ENCODE measurements at regions of chr3 and their contacts with region 1.

Region 1: DNA sequence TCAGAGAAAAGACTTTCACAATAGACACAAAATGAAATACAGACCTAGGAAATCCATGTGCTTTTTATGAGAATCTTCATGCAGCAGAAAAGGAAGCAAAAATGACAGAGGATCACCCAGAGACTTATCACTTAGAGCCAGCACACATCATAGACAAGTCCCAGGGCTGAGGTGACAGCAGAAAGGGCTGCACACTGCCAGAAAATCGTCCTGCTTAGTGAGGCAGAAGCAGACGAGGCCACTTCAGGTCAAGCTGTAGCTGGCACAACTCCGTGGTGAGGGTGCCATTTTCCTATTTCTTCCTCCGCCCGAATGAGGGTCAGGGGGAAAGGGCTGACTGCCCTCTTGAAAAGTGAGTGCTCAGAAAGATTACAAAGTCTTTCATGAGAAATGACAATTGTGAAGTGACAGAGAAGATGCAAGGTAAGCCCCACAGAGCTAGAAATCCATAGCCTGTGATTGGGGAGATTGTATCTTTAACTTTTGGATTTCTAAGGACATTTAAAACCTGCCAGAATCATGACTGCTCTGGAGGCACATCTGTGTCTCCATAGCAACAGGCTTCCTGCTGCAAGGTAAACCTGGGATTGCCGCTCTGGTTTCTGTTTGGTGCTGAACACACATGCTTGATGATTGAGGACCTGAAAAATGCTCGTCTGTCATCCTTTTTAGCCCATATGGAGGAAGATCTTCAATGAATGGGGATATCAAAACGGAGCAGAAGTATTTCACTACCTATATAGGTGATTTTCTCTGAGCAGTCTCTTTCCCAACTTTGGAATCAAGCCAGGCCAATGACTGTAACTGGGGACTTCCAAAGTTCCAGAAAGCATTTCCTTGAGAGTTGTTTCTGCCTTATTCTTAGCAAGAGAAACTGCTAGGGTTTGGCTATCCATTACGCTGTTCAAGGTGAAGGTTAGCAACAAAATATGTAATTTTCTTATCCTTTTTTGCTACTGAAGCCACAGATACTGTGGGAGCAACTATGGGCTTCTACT is 96.2 kb upstream of the TNIK start:
- DNase-seq: no peak
- CTCF ChIP-seq: no peak

Region 2: GRCh38 chr3:171511450-171511849 is 45.0 kb before region 1 on chr3:
- CTCF ChIA-PET with region 1: no interaction called
- POLR2A ChIA-PET with region 1: interaction called, 12 read pairs
- DNase-seq: no peak
- CTCF ChIP-seq: no peak

Region 3: DNA sequence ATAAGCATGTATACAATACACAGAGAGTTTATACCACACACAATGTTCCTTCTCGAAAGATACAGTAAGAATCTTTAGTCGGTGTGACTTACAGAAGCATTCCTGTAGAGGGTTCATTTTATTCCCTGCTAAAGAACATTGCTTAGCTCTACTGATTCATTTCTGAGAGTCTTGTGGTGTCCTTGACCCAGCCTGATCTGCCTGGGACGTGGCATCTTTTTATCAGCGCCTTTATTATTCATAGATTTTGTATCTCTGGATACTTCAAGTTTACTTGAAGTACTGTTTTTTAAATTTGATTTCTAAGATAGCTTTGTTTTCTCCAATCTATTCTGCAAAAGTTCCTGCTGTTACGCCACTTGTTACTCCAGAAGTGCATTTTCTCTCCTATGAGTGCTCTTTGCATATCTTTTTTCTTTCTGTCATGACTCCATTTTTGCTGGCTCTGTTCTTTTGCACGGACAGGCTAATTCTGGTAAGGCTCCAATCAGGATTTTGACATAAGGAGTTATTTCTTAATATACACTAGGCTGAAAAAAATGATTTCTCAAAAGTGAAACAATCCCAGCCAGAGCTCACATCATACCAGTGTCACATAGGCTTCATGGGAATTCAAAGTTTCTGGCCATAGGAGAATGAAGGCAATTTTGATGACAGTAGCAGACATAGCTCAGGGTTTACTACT is 18.3 kb after region 1 on chr3:
- CTCF ChIA-PET with region 1: no interaction called
- POLR2A ChIA-PET with region 1: no interaction called
- DNase-seq: no peak
- CTCF ChIP-seq: no peak